ENCODE measurements at regions of chr4 and their contacts with region 1.

Region 1: DNA sequence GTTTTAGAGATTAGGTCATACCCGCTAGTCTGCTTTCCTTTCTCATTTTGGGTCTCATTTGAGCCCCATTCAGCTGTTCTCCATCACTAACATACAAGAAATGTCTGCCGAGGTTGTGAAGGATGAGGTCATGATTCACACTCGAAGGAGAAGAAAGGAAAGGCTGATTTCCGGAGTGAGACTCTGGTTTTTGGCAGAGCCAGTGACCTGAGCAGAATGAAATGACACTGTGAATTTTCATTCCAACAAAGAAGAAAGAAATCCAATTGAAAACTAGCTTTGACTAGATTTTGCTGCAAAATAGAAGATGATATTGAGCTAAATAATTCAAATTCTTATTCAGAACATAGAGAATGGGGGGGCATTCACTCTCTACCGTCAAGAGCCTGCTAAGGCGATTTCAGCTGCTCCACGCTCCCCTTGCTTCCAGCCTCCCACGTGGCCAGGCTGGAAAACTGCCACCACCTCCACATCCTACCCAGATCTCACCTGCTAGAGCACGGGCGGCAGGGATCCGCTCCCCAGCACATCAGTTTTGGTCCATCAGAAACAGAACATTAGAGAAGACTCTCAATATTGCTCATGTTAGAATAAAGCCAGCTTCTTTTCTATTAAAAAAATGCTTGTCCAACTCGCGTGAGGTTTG is 39.0 kb downstream of the F11 start:
- DNase-seq: no peak
- ATAC-seq: no peak

Region 2: GRCh38 chr4:184771416-184771815 is 1533.6 kb before region 1 on chr4:
- intact Hi-C with region 1: loop called (anchors 5 kb)
- DNase-seq: no peak
- ATAC-seq: no peak

Region 3: GRCh38 chr4:185445209-185445608 is 859.8 kb before region 1 on chr4:
- intact Hi-C with region 1: no loop called
- DNase-seq: no peak
- ATAC-seq: no peak

Region 4: DNA sequence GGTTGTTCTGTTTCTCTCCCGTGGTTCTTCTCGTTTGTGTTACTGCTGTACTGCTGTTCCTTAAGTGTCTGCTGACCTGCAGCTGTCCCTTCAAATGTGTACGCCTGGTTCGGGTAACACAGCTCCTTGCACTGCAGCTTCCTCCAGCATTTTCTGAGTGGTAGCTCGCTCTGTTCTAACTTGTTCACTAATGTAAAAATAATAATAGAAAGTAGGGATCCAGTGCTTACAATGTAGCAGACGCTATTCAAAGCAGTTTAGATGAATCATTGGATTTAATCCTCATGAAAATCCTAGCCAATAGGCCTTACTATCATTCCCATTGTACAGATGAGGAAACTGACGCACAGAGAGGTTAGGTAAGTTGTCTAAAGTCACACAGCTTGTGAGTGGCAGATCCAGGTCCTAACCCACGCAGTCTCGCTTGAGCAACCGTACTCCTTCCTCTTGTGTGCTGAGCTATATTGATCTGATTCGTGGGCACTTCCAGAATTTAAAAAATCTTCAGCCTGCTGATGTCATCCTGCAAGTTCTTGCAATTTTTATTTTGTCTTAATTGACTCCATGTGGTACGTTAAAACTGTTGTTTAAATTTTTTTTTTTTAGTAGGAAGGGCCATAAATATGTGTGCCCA is 866.8 kb after region 1 on chr4:
- intact Hi-C with region 1: no loop called
- DNase-seq: no peak
- ATAC-seq: no peak